ENCODE measurements at regions of chr14 and their contacts with region 1.

Region 1: GRCh38 chr14:69611201-69612011 is at the start of gene SUSD6:
- DNase-seq: peak; percentile 89 to 95
- H3K4me3 ChIP-seq: peak within 1 kb of the TSS; percentile 83 to 91
- H3K27ac ChIP-seq: peak within 1 kb of the TSS; percentile 92 to 97
- H3K4me1 ChIP-seq: peaks cover 0 to 51% (median 44%) of the 10 kb centered on the region in 4 donors
- H3K27me3 ChIP-seq: no peaks in the 10 kb centered on the region
- CTCF ChIP-seq: no peak

Region 2: GRCh38 chr14:69666690-69667239 is 55.4 kb after region 1 on chr14:
- intact Hi-C with region 1: loop called (anchors 10 kb)
- DNase-seq: no peak
- H3K4me3 ChIP-seq: no peak overlapping the region
- H3K27ac ChIP-seq: peak overlapping the region; percentile 69 to 76
- H3K4me1 ChIP-seq: peaks cover 0 to 96% (median 78%) of the 10 kb centered on the region in 4 donors
- H3K27me3 ChIP-seq: no peaks in the 10 kb centered on the region
- CTCF ChIP-seq: no peak